ENCODE measurements at regions of chr10 and their contacts with region 1.

Region 1: GRCh38 chr10:100998991-100999741 is 442 bp upstream of the LZTS2 start:
- DNase-seq: peak; percentile 95

Region 2: GRCh38 chr10:101012525-101013364 is 13.6 kb after region 1 on chr10:
- intact Hi-C with region 1: loop called in 1 of 2 experiments (anchors 2 kb)
- DNase-seq: peak; percentile 96

Measured in posterior vena cava (tissue), 2 donors.